GM18951 (cell line): ENCODE measurements at regions of chr14 and their contacts with region 1.

Region 1: DNA sequence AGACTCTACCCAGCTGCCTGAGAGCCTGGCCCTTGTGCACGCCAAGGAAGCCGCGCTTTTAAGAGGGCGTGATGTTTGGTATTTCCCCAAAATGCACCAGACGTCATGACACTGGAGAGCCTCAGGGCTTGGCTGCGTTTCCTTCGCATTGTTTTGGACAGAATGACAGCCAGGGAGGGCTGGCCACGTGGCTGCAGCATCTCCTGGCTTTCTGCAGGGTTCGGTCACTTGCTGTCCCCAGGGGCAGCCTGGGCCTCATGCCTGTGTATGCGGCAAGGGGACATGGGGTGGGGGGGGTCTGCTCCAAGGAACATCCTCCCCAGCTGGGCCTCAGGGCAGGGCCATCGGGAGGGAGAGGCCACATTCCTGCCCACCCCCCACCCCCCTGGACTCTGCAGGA is 16.2 kb upstream of the NUDT14 start:
- POLR2A ChIP-seq: no peak

Region 2: DNA sequence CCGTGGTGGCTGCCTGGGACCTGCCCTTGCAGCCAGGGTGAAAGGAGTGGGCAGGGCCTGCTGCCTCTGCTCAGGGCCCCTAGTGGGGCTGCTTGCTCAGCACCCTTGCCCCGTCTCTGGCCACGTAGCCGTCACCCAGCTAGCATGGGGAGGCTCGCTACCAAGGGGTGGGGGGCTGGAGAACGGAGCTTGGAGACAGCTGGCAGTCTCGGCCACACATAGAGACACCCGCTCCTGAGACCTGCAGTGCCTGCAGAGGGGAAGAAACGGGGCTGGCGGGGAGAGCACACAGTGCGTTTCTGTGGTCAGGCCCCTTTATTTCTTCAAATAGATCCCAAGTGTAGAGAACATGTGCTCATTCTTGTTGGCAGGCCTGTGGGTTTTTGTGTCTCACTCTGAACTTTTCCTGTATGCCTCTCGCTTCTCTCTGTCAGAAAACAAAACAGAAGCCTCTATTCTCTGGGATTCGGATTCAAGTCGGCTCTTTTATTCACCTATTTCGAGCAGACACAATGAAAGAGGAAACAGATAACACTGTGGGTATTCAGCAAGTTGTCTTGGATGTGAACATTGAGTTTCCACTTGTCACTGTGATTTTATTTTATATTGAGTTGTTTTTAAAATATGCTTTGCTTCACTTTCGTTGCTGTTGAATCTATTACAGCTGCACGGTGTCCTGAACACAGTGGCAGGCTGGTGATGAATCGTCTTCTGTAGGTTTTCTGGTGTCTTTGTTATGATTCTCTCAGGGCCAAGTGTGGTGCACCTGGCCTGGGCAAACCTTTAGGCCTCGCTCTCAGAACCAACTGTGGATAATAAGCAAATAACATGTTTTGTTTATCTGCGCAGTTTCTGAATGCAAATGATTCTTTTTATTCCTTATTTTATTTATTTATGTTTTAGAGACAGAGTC is 143.8 kb after region 1 on chr14:
- in situ Hi-C with region 1: loop called (anchors 10 kb)
- POLR2A ChIP-seq: no peak